Activated CD8-positive, alpha-beta T cell treated with anti-CD3 and anti-CD28 coated beads for 36 hours (primary cell): ENCODE measurements at regions of chr15 and their contacts with region 1.

Region 1: DNA sequence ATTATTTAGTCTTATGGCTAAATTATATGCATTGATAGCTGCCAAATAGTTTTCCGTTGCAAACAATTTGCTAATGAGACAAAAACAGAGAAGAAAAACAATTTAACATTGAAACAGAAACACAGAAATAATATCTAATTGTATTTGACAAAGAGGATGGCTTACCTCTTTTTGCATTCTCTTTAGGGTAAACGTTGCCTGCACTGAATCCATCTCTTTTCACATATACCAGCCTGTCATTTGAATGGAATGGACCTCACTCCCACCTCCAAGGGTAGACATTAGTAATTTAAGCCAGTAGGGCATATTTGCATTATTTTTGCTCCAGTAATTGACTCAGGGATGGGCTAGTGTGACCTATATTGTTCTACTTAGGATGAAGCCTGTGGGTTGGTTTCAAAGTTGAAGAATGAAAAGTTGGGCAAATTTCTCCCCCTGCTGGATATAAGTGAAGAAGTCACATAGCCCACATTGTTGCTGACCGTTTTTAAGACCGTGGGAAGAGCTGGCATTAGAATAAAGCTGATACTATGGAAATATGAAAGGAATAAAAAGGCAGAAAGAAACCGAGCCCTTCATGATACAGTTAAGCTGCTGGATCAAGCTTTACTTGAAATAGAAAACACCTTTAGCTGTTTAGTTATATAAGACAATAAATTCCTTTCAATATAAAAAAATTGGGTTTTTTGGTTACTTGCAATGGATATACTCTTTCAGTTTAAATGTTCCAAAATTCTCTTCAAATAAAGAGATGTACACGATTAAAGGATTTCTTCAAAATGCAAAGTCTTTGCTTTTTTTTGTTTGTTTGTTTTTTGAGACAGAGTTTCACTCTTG is 26.9 kb downstream of the PIERCE2 start:
- DNase-seq: no peak
- ATAC-seq: peak; percentile 62
- H3K4me3 Mint-ChIP-seq: no peak overlapping the region
- H3K27ac Mint-ChIP-seq: no peak overlapping the region
- H3K4me1 Mint-ChIP-seq: peaks cover 2% of the 10 kb centered on the region
- H3K27me3 Mint-ChIP-seq: no peaks in the 10 kb centered on the region
- CTCF ChIP-seq: peak; percentile 63

Region 2: DNA sequence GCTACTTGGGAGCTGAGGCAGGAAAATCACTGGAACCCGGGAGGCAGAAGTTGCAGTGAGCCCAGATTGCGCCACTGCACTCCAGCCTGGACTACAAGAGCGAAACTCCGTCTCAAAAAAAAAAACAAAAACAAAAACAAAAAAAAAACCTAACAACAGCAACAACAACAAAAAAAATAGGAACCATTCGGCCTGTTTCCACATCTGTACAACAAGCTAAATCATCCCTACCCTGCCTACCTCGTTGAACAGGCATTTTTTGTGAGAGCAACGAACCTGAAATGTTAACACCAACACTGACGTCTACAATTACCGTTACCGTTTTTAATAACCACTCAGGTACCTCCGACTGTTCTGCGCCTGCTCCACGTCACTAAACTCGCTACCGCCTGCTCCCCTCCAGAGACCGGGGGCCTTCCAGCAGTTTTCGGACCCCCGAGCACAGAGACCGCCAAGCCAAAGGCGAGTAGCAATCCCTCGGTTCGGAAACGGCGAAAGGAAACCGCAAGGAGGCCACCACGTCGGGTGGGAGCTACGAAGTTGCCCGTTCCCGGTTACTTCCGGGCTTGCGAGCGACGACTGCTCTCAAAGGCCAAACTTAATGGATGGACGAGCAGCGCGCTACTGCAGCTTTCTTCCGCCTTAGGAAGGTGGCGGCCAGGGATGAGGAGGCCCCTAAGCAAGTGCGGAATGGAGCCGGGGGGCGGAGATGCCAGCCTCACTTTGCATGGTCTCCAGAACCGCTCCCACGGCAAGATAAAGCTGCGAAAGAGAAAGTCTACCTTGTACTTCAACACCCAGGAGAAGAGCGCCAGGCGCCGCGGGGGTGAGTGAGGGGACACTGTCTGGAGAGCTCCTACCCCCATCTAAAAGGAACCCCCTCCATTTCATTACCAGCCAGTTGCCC is 116.4 kb before region 1 on chr15 and contains the starts of genes PIGB and PIGBOS1:
- CTCF ChIA-PET with region 1: interaction called, 10 read pairs
- POLR2A ChIA-PET with region 1: no interaction called
- intact Hi-C with region 1: no loop called
- DNase-seq: peak; percentile 88
- ATAC-seq: peak; percentile 94
- H3K4me3 Mint-ChIP-seq: peak within 1 kb of the TSS; percentile 91
- H3K27ac Mint-ChIP-seq: peak within 1 kb of the TSS; percentile 99
- H3K4me1 Mint-ChIP-seq: peaks cover 53% of the 10 kb centered on the region
- H3K27me3 Mint-ChIP-seq: no peaks in the 10 kb centered on the region
- CTCF ChIP-seq: no peak
- total RNA-seq, gene PIGB: 14.0 to 17.5 TPM
- total RNA-seq, gene PIGBOS1: 10.5 to 13.2 TPM

Region 3: GRCh38 chr15:55372701-55373440 is 62.3 kb before region 1 on chr15:
- CTCF ChIA-PET with region 1: interaction called, 14 read pairs
- POLR2A ChIA-PET with region 1: no interaction called
- intact Hi-C with region 1: no loop called
- DNase-seq: no peak
- ATAC-seq: no peak
- H3K4me3 Mint-ChIP-seq: no peak overlapping the region
- H3K27ac Mint-ChIP-seq: peak overlapping the region; percentile 61
- H3K4me1 Mint-ChIP-seq: peaks cover 4% of the 10 kb centered on the region
- H3K27me3 Mint-ChIP-seq: no peaks in the 10 kb centered on the region
- CTCF ChIP-seq: no peak

Region 4: GRCh38 chr15:55407949-55408791 is 27.0 kb before region 1 on chr15 and contains the starts of genes CCPG1 and PIERCE2:
- CTCF ChIA-PET with region 1: interaction called, 23 read pairs
- POLR2A ChIA-PET with region 1: no interaction called
- intact Hi-C with region 1: no loop called
- DNase-seq: peak; percentile 90
- ATAC-seq: peak; percentile 95
- H3K4me3 Mint-ChIP-seq: peak within 1 kb of the TSS; percentile 79
- H3K27ac Mint-ChIP-seq: peak within 1 kb of the TSS; percentile 77
- H3K4me1 Mint-ChIP-seq: peaks cover 26% of the 10 kb centered on the region
- H3K27me3 Mint-ChIP-seq: no peaks in the 10 kb centered on the region
- CTCF ChIP-seq: peak; percentile 93
- total RNA-seq, gene CCPG1: 11.0 to 11.1 TPM
- total RNA-seq, gene PIERCE2: not detected

Region 5: GRCh38 chr15:55619783-55620182 is 184.6 kb after region 1 on chr15:
- CTCF ChIA-PET with region 1: no interaction called
- POLR2A ChIA-PET with region 1: no interaction called
- intact Hi-C with region 1: no loop called
- DNase-seq: no peak
- ATAC-seq: no peak
- H3K4me3 Mint-ChIP-seq: no peak overlapping the region
- H3K27ac Mint-ChIP-seq: no peak overlapping the region
- H3K4me1 Mint-ChIP-seq: no peaks in the 10 kb centered on the region
- H3K27me3 Mint-ChIP-seq: peaks cover 7% of the 10 kb centered on the region
- CTCF ChIP-seq: no peak